ENCODE measurements at regions of chr1 and their contacts with region 1.

Region 1: DNA sequence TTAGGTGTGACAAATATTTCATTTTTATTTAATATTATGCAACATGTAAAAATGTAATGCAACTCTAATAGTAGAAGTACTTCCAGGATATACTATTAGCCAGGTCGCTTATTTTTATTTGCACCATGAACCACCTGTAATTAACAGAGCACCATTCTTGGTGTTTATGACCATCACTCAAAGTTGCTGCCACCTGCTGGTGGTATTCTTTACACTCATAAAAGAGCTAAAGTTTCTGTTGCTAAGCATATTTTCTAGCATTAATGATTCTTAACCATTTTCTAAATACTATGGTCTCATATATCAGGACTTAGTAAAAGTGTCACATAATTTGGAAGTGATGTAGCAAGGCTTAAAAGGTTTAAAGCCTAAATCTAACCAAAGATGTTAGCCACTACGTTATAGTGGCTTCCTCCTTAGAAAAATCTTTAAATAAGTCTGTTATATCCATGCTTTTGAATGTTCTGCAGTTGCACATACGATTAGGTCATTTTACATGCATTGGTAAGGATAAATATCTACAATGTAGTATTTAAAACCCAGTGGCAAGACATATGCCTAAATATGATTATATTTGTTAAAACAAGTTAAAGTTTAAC is 244.5 kb downstream of the NEGR1 start:
- DNase-seq: peak; percentile 49
- ATAC-seq: peak; percentile 40; the same call in 1 of the 2 replicates
- H3K4me3 ChIP-seq: no peak overlapping the region
- H3K27ac ChIP-seq: no peak overlapping the region
- H3K4me1 ChIP-seq: no peaks in the 10 kb centered on the region
- H3K27me3 ChIP-seq: no peaks in the 10 kb centered on the region
- CTCF ChIP-seq: peak; percentile 59
- POLR2A ChIP-seq: no peak
- RAD21 ChIP-seq: peak; percentile 58

Region 2: DNA sequence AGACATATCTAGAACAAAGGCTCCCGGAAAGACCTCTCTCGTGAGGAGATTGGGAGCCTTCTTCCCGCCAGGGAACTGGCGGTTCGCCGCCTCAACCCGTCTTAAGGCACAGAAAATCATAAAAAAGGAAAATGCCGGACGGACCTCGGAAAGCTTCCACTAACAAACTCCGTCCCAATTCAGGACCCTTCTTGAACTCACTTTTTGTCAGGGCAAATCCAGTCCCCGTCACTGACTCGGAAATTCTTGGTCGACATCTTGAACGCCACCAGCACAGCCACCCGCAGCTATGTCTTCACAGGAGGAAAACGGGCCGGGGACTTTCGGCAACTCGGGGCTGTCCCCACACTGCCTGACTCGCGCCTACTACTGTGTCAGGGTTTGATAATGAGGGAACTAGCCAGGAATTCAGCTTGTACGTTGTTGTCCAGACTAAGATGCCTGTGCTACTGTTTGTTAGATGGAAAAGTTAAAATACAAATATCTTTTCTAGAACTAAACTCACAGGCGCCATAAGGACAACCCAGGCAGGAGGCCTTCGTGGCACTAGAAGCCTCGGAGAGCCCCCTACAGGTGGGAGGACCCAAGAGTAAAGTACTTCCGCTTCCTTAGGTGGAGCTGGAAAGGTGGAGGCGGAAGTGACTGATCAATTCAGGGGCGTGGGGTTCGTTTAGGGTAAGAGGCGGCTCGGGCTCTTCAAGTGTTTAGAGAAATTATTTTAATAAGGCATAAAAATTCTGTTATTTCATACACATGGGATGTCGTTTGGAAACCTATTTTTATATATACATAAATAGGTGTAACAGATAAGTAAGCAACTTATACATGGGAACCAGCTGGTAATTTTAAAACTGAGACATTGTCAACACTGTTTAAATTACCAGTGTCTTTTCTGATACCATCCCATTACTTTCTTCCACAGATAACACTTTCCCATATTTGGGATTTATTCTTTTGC is 956.8 kb before region 1 on chr1 and contains the start of gene ZRANB2:
- CTCF ChIA-PET with region 1: no interaction called
- POLR2A ChIA-PET with region 1: no interaction called
- dilution Hi-C with region 1: no loop called
- in situ Hi-C with region 1: loop called (anchors 25 kb)
- intact Hi-C with region 1: no loop called
- DNase-seq: peak; percentile 95
- ATAC-seq: peak; percentile 97
- H3K4me3 ChIP-seq: peak within 1 kb of the TSS; percentile 81
- H3K27ac ChIP-seq: peak within 1 kb of the TSS; percentile 84
- H3K4me1 ChIP-seq: peaks cover 5% of the 10 kb centered on the region
- H3K27me3 ChIP-seq: no peaks in the 10 kb centered on the region
- CTCF ChIP-seq: peak; percentile 87
- POLR2A ChIP-seq: peak; percentile 94
- RAD21 ChIP-seq: no peak
- total RNA-seq, gene ZRANB2: 23.7 and 41.7 TPM in 2 replicates

Region 3: DNA sequence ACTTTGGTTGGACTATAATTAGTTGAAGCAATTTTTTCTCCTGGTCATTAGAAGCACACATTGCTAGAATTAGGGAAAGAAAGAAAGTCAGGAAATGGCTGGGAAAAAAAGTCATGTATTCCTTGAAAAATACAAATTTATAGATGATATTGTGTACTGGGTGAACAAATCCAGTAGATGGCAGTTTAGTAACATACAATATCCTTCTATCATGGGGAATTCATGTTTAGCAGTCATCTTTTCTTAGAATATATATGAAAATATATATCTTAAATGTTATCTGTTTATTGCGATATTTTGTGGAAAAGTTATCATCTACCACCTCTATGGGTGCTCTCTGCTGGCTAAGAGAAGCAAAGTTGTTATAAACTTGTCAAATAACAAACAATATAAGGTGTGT is 943.9 kb before region 1 on chr1:
- CTCF ChIA-PET with region 1: no interaction called
- POLR2A ChIA-PET with region 1: no interaction called
- dilution Hi-C with region 1: no loop called
- in situ Hi-C with region 1: loop called (anchors 25 kb)
- intact Hi-C with region 1: loop called (anchors 5 kb)
- DNase-seq: peak; percentile 45
- ATAC-seq: peak; percentile 41
- H3K4me3 ChIP-seq: no peak overlapping the region
- H3K27ac ChIP-seq: no peak overlapping the region
- H3K4me1 ChIP-seq: peaks cover 4% of the 10 kb centered on the region
- H3K27me3 ChIP-seq: no peaks in the 10 kb centered on the region
- CTCF ChIP-seq: peak; percentile 74
- POLR2A ChIP-seq: no peak
- RAD21 ChIP-seq: peak; percentile 72

Region 4: DNA sequence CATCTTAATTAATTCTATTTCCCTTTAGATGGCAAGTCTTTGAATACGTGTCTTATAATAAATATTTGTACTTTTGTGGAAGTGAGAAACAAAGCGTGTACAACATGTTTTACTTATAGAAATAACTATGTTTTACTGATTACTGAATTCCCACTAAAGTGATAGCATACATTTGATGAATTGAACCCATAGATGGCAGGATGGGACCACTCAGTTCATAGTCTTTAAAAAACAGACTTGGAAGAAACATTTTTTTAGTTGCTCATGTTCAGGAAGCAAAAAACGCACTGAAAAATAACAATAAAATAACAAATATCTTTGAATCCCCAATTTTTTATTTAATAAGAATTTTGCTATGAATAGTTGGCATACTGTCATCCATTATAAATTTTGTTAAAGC is 449.9 kb before region 1 on chr1:
- CTCF ChIA-PET with region 1: interaction called, 5 read pairs
- POLR2A ChIA-PET with region 1: no interaction called
- dilution Hi-C with region 1: no loop called
- in situ Hi-C with region 1: loop called (anchors 5 kb)
- intact Hi-C with region 1: loop called (anchors 1 kb)
- DNase-seq: peak; percentile 47
- ATAC-seq: 0 out of 2 replicates have a peak, but pooled peaks have one; percentile 46
- H3K4me3 ChIP-seq: no peak overlapping the region
- H3K27ac ChIP-seq: no peak overlapping the region
- H3K4me1 ChIP-seq: no peaks in the 10 kb centered on the region
- H3K27me3 ChIP-seq: no peaks in the 10 kb centered on the region
- CTCF ChIP-seq: peak; percentile 58
- POLR2A ChIP-seq: no peak
- RAD21 ChIP-seq: peak; percentile 61

Region 5: DNA sequence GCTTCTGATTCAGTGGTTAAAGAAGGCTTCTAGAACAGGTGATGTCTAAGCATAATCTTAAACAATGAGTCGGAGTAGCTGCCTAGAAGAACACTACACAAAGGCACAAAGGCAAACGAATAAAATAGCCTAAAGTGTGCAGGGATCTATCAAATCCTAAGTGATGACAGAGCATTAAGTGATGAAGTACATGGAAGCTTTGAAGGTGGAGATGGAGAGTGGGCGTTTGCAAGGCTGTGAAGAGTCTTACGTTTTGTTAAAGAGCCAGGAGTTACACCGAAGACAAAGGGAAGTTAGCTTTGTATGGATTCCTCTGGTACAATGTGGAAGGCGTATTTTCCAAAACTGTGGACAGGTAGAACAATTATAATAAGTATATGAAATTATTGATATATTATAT is 26.1 kb before region 1 on chr1:
- CTCF ChIA-PET with region 1: no interaction called
- POLR2A ChIA-PET with region 1: no interaction called
- dilution Hi-C with region 1: no loop called
- in situ Hi-C with region 1: no loop called
- intact Hi-C with region 1: no loop called
- DNase-seq: no peak
- ATAC-seq: no peak
- H3K4me3 ChIP-seq: no peak overlapping the region
- H3K27ac ChIP-seq: no peak overlapping the region
- H3K4me1 ChIP-seq: 0 out of 2 replicates have a peak, but pooled peaks cover under 1% of the 10 kb centered on the region
- H3K27me3 ChIP-seq: no peaks in the 10 kb centered on the region
- CTCF ChIP-seq: no peak
- POLR2A ChIP-seq: no peak
- RAD21 ChIP-seq: no peak